Upper lobe of right lung (tissue), 1 donor: ENCODE measurements at regions of chr19 and their contacts with region 1.

Region 1: DNA sequence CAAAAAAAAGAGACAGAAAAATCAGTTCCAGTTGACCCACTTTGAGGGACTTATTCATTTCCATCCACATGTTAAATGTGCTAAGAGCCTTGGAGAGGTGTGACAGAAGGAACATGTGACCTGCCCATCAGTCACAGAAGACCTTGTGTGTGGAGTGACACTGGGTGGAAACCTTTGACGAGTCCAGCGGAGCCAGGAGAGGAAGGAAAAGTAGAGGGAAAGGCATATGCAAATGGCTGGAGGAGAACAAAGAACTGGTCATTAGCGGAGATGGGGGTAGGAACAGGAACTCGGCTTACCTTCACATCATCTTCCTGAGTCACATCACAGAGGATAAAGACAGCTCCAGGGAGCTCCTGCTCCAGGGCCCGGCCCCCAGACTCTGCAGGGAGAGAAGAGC is 2.3 kb downstream of the HSD17B14 start:
- DNase-seq: no peak
- ATAC-seq: no peak
- H3K4me3 ChIP-seq: no peak overlapping the region
- H3K27ac ChIP-seq: no peak overlapping the region
- H3K4me1 ChIP-seq: no peaks in the 10 kb centered on the region
- H3K27me3 ChIP-seq: no peaks in the 10 kb centered on the region
- CTCF ChIP-seq: no peak

Region 2: DNA sequence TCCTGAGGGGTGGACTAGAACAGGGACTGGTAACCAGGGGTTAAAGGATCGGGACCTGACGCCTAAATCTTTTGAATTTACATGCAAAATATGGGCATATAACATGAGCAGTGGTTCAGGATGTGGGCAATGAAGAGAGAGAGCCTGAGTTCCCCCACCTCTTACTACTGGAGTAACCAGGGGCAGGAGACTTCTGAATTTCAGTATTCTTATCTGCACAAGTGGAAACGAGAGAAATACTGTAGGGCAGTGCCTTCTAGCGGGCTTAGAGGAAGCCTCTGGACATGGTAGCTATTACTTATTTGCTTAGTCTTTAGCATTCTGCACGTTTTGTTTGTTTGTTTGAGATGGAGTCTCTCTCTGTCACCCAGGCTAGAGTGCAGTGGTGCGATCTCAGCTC is 49.4 kb before region 1 on chr19:
- intact Hi-C with region 1: no loop called
- DNase-seq: no peak
- ATAC-seq: no peak
- H3K4me3 ChIP-seq: no peak overlapping the region
- H3K27ac ChIP-seq: no peak overlapping the region
- H3K4me1 ChIP-seq: peaks cover 19% of the 10 kb centered on the region
- H3K27me3 ChIP-seq: no peaks in the 10 kb centered on the region
- CTCF ChIP-seq: peak; percentile 20

Region 3: DNA sequence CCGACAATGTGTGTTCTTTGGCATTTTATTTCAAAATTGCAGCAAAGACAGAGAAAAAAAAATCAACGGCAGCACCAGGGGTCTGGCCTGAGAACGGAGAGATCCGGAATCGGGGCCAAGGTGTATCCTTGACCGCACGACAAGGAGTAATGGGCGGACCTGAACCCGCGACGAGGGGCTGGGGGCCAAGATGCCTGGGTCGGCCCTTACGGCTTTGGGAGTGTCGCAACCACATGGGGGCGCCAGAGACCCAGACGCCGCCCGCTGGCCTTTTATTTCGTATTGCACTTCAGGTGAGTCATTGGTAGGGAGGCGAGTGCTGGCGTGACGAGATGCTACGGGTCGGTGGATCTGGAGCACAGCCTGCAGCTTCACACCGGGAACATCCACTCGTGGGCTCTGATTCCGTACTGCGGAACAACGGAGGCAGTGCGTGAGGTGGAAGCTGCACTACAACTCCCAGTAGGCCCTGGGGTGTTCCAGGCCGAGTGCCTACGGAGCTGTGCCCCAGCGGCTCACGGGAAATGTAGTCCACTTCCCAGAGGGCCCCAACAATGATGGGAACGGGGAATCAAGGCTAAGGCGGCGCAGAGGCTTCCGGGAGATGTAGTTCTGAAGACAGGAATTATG is 38.8 kb before region 1 on chr19:
- intact Hi-C with region 1: loop called (anchors 5 kb)
- DNase-seq: peak; percentile 94
- ATAC-seq: peak; percentile 99
- H3K4me3 ChIP-seq: peak overlapping the region; percentile 62
- H3K27ac ChIP-seq: peak overlapping the region; percentile 61
- H3K4me1 ChIP-seq: peaks cover 9% of the 10 kb centered on the region
- H3K27me3 ChIP-seq: no peaks in the 10 kb centered on the region
- CTCF ChIP-seq: peak; percentile 93